Activated CD4-positive, alpha-beta T cell treated with anti-CD3 and anti-CD28 coated beads, Interleukin-2, amount 10 ng/mL, durations not matched to agents 24 days and 14 days (primary cell): ENCODE measurements at regions of chr5 and their contacts with region 1.

Region 1: GRCh38 chr5:163695830-163696578 is 190.6 kb downstream of the MAT2B start:
- DNase-seq: no peak
- H3K4me3 Mint-ChIP-seq: no peak overlapping the region
- H3K27ac Mint-ChIP-seq: no peak overlapping the region
- H3K4me1 Mint-ChIP-seq: no peaks in the 10 kb centered on the region
- H3K27me3 Mint-ChIP-seq: no peaks in the 10 kb centered on the region

Region 2: GRCh38 chr5:163525096-163525495 is 170.9 kb before region 1 on chr5:
- intact Hi-C with region 1: no loop called
- DNase-seq: no peak
- H3K4me3 Mint-ChIP-seq: no peak overlapping the region
- H3K27ac Mint-ChIP-seq: no peak overlapping the region
- H3K4me1 Mint-ChIP-seq: no peaks in the 10 kb centered on the region
- H3K27me3 Mint-ChIP-seq: no peaks in the 10 kb centered on the region

Region 3: GRCh38 chr5:164504141-164504772 is 808.3 kb after region 1 on chr5:
- intact Hi-C with region 1: loop called (anchors 10 kb)
- DNase-seq: peak; percentile 74
- H3K4me3 Mint-ChIP-seq: no peak overlapping the region
- H3K27ac Mint-ChIP-seq: no peak overlapping the region
- H3K4me1 Mint-ChIP-seq: no peaks in the 10 kb centered on the region
- H3K27me3 Mint-ChIP-seq: no peaks in the 10 kb centered on the region